ENCODE measurements at regions of chr4 and their contacts with region 1.

Region 1: DNA sequence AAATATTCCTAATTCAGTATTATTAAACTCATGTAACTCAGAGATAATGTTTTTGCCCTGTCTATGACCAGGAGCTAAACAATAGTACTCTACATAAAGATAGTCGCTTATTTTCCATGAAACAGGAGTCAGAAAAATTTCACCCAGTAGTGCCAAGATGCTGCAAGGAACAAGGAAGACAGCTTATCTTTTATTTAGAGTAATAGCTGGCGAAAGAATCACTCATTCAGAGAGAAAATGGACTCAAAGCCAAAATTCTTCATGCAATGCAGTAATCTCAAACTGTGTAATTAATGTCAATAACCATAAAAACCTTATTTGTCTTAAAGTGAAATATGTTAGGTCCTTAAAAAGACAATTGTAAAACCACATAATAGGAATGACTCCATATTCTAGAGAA is 477.8 kb downstream of the ANKRD50 start:
- DNase-seq: peak; percentile 46
- ATAC-seq: peak; percentile 58
- H3K4me3 ChIP-seq: no peak overlapping the region
- H3K27ac ChIP-seq: no peak overlapping the region
- H3K4me1 ChIP-seq: peaks cover 18% of the 10 kb centered on the region
- H3K27me3 ChIP-seq: no peaks in the 10 kb centered on the region
- CTCF ChIP-seq: no peak

Region 2: GRCh38 chr4:124177647-124178425 is 56.9 kb before region 1 on chr4:
- CTCF ChIA-PET with region 1: no interaction called
- POLR2A ChIA-PET with region 1: no interaction called
- intact Hi-C with region 1: loop called (anchors 10 kb)
- DNase-seq: peak; percentile 80
- ATAC-seq: peak; percentile 83
- H3K4me3 ChIP-seq: peak overlapping the region; percentile 37; the same call in 1 of the 2 replicates
- H3K27ac ChIP-seq: peak overlapping the region; percentile 76
- H3K4me1 ChIP-seq: peaks cover 24% of the 10 kb centered on the region
- H3K27me3 ChIP-seq: no peaks in the 10 kb centered on the region
- CTCF ChIP-seq: no peak

Region 3: GRCh38 chr4:124210746-124211145 is 24.0 kb before region 1 on chr4:
- CTCF ChIA-PET with region 1: no interaction called
- POLR2A ChIA-PET with region 1: no interaction called
- intact Hi-C with region 1: no loop called
- DNase-seq: no peak
- ATAC-seq: no peak
- H3K4me3 ChIP-seq: no peak overlapping the region
- H3K27ac ChIP-seq: no peak overlapping the region
- H3K4me1 ChIP-seq: peaks cover 19% of the 10 kb centered on the region
- H3K27me3 ChIP-seq: no peaks in the 10 kb centered on the region
- CTCF ChIP-seq: no peak